HEK293 (cell line): ENCODE measurements at regions of chr5 and their contacts with region 1.

Region 1: GRCh38 chr5:36690041-36690961 is 83.9 kb downstream of the SLC1A3 start:
- H3K4me3 ChIP-seq: peak overlapping the region; percentile 65
- H3K27ac ChIP-seq: peak overlapping the region; percentile 70
- H3K4me1 ChIP-seq: no peaks in the 10 kb centered on the region
- CTCF ChIP-seq: peak; percentile 99

Region 2: DNA sequence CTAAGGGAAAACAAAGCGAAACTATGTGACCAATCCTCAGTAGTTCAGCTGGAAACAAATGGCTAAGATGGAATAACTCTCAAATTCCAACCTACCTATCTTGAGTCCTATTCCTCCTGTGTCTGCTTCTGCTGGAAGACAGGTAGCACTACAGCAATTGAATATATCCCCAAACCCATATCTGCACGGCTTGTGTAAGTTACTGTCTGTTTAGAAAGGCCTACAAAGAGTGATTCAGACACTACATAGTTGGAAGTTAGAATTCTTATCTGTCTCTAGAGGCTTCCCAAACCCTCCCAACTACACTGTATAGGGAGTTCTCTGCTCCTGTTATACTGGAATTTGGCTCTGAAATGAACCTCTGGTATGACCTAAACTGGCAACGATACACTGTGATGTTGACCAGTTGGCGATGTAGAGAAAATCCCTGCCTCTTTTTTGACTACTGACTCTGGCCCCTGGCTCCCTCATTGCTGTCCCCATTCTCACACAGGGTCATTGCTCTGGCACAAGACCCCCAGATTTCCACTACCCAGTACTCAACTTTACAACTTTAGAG is 426.0 kb before region 1 on chr5:
- CTCF ChIA-PET with region 1: interaction called, 13 read pairs
- POLR2A ChIA-PET with region 1: no interaction called
- H3K4me3 ChIP-seq: no peak overlapping the region
- H3K27ac ChIP-seq: no peak overlapping the region
- H3K4me1 ChIP-seq: no peaks in the 10 kb centered on the region
- CTCF ChIP-seq: no peak

Region 3: GRCh38 chr5:36403632-36404311 is 286.5 kb before region 1 on chr5:
- CTCF ChIA-PET with region 1: interaction called, 20 read pairs
- POLR2A ChIA-PET with region 1: no interaction called
- H3K4me3 ChIP-seq: no peak overlapping the region
- H3K27ac ChIP-seq: no peak overlapping the region
- H3K4me1 ChIP-seq: no peaks in the 10 kb centered on the region
- CTCF ChIP-seq: no peak

Region 4: DNA sequence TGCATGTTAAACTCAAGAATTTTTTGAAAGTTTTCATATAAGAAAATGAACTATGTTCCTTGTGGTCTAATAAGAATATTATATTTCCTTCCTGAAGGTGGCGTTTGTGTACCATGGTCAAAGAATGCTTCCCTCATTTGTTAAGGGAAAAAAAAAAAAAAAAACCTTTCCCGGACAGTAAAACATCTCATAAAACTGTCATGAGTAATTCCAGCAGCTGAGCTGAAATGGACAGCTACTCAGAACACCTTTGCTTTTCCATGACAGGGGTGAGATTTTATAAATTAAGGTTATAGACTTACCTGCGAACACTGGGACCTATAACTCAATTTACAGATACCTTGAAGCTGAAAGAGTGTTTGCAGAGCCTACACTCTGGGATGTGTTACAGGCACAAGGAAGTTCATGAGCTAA is 275.4 kb before region 1 on chr5:
- CTCF ChIA-PET with region 1: interaction called, 352 read pairs
- POLR2A ChIA-PET with region 1: interaction called, 13 read pairs
- H3K4me3 ChIP-seq: no peak overlapping the region
- H3K27ac ChIP-seq: no peak overlapping the region
- H3K4me1 ChIP-seq: no peaks in the 10 kb centered on the region
- CTCF ChIP-seq: peak; percentile 71

Region 5: GRCh38 chr5:36507332-36507952 is 182.9 kb before region 1 on chr5:
- CTCF ChIA-PET with region 1: interaction called, 84 read pairs
- POLR2A ChIA-PET with region 1: interaction called, 5 read pairs
- H3K4me3 ChIP-seq: no peak overlapping the region
- H3K27ac ChIP-seq: no peak overlapping the region
- H3K4me1 ChIP-seq: peaks cover 5% of the 10 kb centered on the region; the same call in 1 of the 2 replicates
- CTCF ChIP-seq: peak; percentile 60

Region 6: DNA sequence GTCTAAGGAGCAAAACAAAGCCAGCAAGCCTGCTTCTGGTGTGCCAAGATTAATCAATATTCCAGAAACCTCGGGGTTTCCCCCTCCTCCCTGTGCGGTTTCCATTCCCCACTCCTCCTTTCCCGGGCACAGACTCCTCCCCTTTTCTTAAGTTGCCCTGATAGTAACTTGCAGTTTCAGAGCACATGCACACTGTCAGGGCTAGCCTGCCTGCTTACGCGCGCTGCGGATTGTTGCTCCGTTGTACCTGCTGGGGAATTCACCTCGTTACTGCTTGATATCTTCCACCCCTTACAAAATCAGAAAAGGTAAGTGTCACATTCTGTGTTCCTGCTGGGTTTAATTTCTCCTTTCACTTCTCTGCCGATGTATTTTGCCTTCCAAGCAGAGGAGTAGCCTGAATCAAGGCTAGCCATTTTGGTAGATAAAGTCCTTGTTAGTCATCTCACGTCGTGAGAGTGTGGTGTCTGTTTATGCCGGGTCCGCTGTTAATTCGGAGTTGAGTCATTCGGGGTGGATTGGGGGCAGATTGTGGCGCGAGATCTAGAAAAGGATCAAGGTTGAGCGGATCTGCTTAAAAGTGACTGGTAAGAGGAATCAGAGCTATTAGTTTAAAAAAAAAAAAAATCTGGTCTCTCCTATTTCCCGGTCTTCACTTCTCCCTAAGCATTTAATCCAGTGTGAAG is 83.7 kb before region 1 on chr5 and contains the start of gene SLC1A3:
- CTCF ChIA-PET with region 1: interaction called, 23 read pairs
- POLR2A ChIA-PET with region 1: interaction called, 8 read pairs
- H3K4me3 ChIP-seq: peak within 1 kb of the TSS; percentile 57
- H3K27ac ChIP-seq: peak within 1 kb of the TSS; percentile 65; the same call in 1 of the 2 replicates
- H3K4me1 ChIP-seq: peaks cover 17% of the 10 kb centered on the region
- CTCF ChIP-seq: no peak

Region 7: DNA sequence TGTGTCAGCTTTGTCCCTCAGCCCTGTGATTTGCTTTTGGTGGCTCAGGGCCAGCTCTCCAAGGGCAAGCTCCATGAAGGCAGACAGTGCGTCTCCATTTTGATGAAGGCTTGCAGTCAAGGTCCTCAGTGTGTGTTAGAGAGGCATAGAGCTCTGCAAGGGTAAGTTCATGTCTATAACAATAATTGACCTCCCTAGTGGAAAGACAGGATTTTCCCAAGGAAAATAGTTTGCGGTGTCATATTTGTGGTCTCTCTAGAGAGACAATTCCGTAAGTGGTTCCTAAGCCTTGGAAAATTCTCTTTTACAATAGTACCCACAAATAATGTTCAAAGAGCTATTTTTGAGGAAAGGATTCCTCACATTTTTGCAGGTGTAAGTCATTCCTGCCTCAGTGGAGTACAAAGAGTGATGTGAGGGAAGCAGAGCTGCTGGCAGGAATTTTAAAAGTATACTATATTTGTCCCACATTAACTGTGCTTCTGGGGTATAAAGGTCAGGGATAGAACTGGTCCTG is 43.7 kb before region 1 on chr5:
- CTCF ChIA-PET with region 1: interaction called, 34 read pairs
- POLR2A ChIA-PET with region 1: no interaction called
- H3K4me3 ChIP-seq: no peak overlapping the region
- H3K27ac ChIP-seq: no peak overlapping the region
- H3K4me1 ChIP-seq: peaks cover 14% of the 10 kb centered on the region
- CTCF ChIP-seq: no peak